ENCODE measurements at regions of chr4 and their contacts with region 1.

Region 1: GRCh38 chr4:142567199-142567598 is 278.9 kb downstream of the INPP4B start:
- DNase-seq: peak; percentile 26 to 88 (median 50)
- ATAC-seq: peak; percentile 73
- H3K4me3 ChIP-seq: peak overlapping the region; percentile 54
- H3K4me3 Mint-ChIP-seq: peak overlapping the region; percentile 88
- H3K27ac ChIP-seq: peak overlapping the region; percentile 72 to 78
- H3K27ac Mint-ChIP-seq: peak overlapping the region; percentile 95
- H3K4me1 ChIP-seq: peaks cover 9% of the 10 kb centered on the region
- H3K4me1 Mint-ChIP-seq: peaks cover 81% of the 10 kb centered on the region
- H3K27me3 ChIP-seq: no peaks in the 10 kb centered on the region
- H3K27me3 Mint-ChIP-seq: no peaks in the 10 kb centered on the region
- CTCF ChIP-seq: peak; percentile 59

Region 2: DNA sequence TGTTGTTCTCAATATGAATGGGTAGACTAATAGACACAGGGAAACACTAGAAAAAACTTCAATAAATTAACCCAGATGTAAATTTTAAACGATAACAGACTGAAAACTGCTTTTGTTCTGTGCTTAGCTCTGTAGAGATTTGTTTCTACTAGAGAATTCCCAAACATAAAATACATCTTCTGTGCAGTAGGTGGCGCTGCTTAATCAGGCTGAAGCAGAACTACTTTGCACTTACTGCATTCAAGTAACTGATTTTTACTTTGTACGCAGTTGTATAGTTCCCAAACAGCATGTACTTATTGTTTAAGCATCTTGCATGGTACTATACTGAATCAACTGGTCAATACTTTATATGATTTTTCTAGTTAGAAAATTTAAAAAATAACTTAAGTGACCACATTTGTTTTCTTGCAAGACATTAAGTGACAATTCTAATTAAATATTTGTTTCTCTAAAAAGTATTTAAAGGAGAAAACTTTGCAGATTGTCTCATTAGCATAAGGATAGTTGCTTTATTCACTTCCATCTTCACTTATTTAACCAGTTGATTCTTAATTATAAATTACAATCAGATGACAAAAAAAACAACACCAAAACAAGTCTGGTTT is 440.2 kb before region 1 on chr4:
- CTCF ChIA-PET with region 1: no interaction called
- POLR2A ChIA-PET with region 1: no interaction called
- intact Hi-C with region 1: loop called in 1 of 2 experiments (anchors 1 kb)
- DNase-seq: peak; percentile 35 to 83 (median 57)
- ATAC-seq: peak; percentile 80
- H3K4me3 ChIP-seq: no peak overlapping the region
- H3K4me3 Mint-ChIP-seq: no peak overlapping the region
- H3K27ac ChIP-seq: no peak overlapping the region
- H3K27ac Mint-ChIP-seq: peak overlapping the region; percentile 6
- H3K4me1 ChIP-seq: peaks cover 8% of the 10 kb centered on the region
- H3K4me1 Mint-ChIP-seq: peaks cover 33% of the 10 kb centered on the region
- H3K27me3 ChIP-seq: no peaks in the 10 kb centered on the region
- H3K27me3 Mint-ChIP-seq: no peaks in the 10 kb centered on the region
- CTCF ChIP-seq: peak; percentile 85

Region 3: GRCh38 chr4:142353149-142353738 is 214.0 kb before region 1 on chr4:
- CTCF ChIA-PET with region 1: interaction called, 32 read pairs
- POLR2A ChIA-PET with region 1: interaction called, 36 read pairs
- intact Hi-C with region 1: loop called in 1 of 2 experiments (anchors 2 kb)
- DNase-seq: peak in 4 of 14 experiments; percentile 43 to 74 (median 64)
- ATAC-seq: peak; percentile 19
- H3K4me3 ChIP-seq: no peak overlapping the region
- H3K4me3 Mint-ChIP-seq: peak overlapping the region; percentile 52
- H3K27ac ChIP-seq: peak overlapping the region in 1 of 2 donors; percentile 72
- H3K27ac Mint-ChIP-seq: peak overlapping the region; percentile 89
- H3K4me1 ChIP-seq: peaks cover 45% of the 10 kb centered on the region
- H3K4me1 Mint-ChIP-seq: peaks cover 99% of the 10 kb centered on the region
- H3K27me3 ChIP-seq: no peaks in the 10 kb centered on the region
- H3K27me3 Mint-ChIP-seq: no peaks in the 10 kb centered on the region
- CTCF ChIP-seq: peak; percentile 97

Region 4: DNA sequence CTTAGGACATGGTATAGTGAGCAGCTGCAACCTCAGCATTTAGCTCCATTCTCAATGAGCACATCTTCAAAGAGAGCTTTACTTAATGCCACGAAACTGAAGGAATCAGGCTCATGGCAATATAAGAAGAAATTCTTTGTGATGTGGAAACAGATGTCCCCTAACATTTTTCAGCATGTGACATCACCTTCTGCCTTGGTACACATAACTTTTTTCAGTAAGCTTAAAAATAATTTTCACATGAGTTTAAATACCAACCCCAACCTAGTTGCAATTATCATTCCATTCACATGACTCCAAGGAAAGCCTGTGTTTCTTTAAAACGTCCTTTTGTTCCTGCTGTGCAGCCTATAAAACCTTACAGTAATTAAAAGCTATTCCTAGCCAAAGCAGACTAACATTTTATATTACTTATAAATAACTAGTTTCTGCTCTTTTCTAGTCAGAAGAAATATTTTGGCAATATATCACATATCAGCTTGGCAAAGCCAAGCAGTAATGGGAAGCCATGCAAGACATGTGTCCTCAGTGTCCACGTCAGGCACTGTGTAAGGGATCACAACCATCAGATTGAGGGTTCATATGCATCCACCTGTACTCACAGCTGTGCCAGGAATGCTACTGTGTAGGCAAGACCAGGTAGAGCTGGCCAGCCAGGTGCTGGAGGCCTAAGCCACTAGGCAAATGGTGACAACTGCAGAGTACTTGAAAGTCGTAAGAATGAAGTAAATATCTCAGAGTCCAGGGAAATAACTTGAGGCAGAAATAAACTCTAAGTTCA is 187.7 kb before region 1 on chr4:
- CTCF ChIA-PET with region 1: interaction called, 7 read pairs
- POLR2A ChIA-PET with region 1: interaction called, 15 read pairs
- intact Hi-C with region 1: no loop called
- DNase-seq: no peak
- ATAC-seq: no peak
- H3K4me3 ChIP-seq: no peak overlapping the region
- H3K4me3 Mint-ChIP-seq: peak overlapping the region; percentile 23
- H3K27ac ChIP-seq: no peak overlapping the region
- H3K27ac Mint-ChIP-seq: peak overlapping the region; percentile 84
- H3K4me1 ChIP-seq: peaks cover 21% of the 10 kb centered on the region
- H3K4me1 Mint-ChIP-seq: peaks cover 90% of the 10 kb centered on the region
- H3K27me3 ChIP-seq: no peaks in the 10 kb centered on the region
- H3K27me3 Mint-ChIP-seq: no peaks in the 10 kb centered on the region
- CTCF ChIP-seq: no peak

Region 5: GRCh38 chr4:142405021-142405694 is 162.0 kb before region 1 on chr4:
- CTCF ChIA-PET with region 1: interaction called, 11 read pairs
- POLR2A ChIA-PET with region 1: interaction called, 49 read pairs
- intact Hi-C with region 1: loop called in 1 of 2 experiments (anchors 2 kb)
- DNase-seq: peak; percentile 11 to 83 (median 44)
- ATAC-seq: peak; percentile 64
- H3K4me3 ChIP-seq: peak overlapping the region; percentile 63
- H3K4me3 Mint-ChIP-seq: peak overlapping the region; percentile 99
- H3K27ac ChIP-seq: peak overlapping the region; percentile 62 to 64
- H3K27ac Mint-ChIP-seq: peak overlapping the region; percentile 96
- H3K4me1 ChIP-seq: peaks cover 28% of the 10 kb centered on the region
- H3K4me1 Mint-ChIP-seq: peaks cover 72% of the 10 kb centered on the region
- H3K27me3 ChIP-seq: no peaks in the 10 kb centered on the region
- H3K27me3 Mint-ChIP-seq: no peaks in the 10 kb centered on the region
- CTCF ChIP-seq: no peak

Region 6: DNA sequence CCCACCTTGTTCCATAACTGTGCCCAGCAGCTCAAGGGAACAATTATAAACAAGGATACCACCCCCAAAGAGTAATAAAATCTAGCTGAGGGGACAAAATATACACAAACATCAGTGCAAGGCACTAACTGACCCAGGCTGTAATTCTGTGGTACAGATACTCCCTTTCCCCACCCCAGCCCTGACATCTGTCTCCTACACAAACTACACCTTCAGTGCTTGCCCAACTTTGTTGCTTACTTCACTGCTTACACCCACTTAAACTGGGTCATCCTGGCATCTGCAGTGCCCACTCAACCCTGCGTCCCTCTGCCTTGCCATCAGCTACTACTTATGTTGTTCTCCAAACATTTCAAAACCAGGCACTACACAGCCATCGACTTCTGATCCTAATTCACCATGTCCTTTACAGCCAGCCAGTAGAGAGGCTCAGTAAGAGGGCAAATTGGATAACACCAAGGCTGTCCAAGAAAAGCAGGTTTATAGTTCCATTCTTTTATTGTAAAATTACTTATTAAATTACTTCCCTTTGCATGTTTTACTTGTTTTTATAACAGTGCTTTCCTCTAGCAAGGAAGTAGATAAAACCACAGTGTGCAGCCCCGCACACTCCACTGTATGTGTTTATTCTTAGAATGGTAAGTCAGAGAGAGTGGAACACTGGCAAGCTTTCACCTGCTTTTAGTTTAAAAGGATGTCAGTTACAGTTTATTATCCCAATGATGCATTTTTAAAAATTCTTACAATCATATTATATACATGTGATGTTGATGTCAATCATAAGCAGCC is 129.3 kb after region 1 on chr4:
- CTCF ChIA-PET with region 1: no interaction called
- POLR2A ChIA-PET with region 1: interaction called, 32 read pairs
- intact Hi-C with region 1: loop called in 1 of 2 experiments (anchors 5 kb)
- DNase-seq: peak in 10 of 14 experiments; percentile 9 to 66 (median 32)
- ATAC-seq: peak; percentile 72
- H3K4me3 ChIP-seq: no peak overlapping the region
- H3K4me3 Mint-ChIP-seq: peak overlapping the region; percentile 70
- H3K27ac ChIP-seq: peak overlapping the region; percentile 74 to 76
- H3K27ac Mint-ChIP-seq: no peak overlapping the region
- H3K4me1 ChIP-seq: peaks cover 29% of the 10 kb centered on the region
- H3K4me1 Mint-ChIP-seq: peaks cover 74% of the 10 kb centered on the region
- H3K27me3 ChIP-seq: no peaks in the 10 kb centered on the region
- H3K27me3 Mint-ChIP-seq: no peaks in the 10 kb centered on the region
- CTCF ChIP-seq: no peak

Region 7: GRCh38 chr4:142719854-142720541 is 152.8 kb after region 1 on chr4:
- CTCF ChIA-PET with region 1: interaction called, 7 read pairs
- POLR2A ChIA-PET with region 1: interaction called, 4 read pairs
- intact Hi-C with region 1: loop called in 1 of 2 experiments (anchors 5 kb)
- DNase-seq: peak in 4 of 14 experiments; percentile 18 to 68 (median 65)
- ATAC-seq: peak; percentile 73
- H3K4me3 ChIP-seq: no peak overlapping the region
- H3K4me3 Mint-ChIP-seq: peak overlapping the region; percentile 31
- H3K27ac ChIP-seq: no peak overlapping the region
- H3K27ac Mint-ChIP-seq: peak overlapping the region; percentile 71
- H3K4me1 ChIP-seq: peaks cover 8% of the 10 kb centered on the region
- H3K4me1 Mint-ChIP-seq: peaks cover 43% of the 10 kb centered on the region
- H3K27me3 ChIP-seq: no peaks in the 10 kb centered on the region
- H3K27me3 Mint-ChIP-seq: no peaks in the 10 kb centered on the region
- CTCF ChIP-seq: peak; percentile 86